Activated CD8-positive, alpha-beta memory T cell treated with anti-CD3 and anti-CD28 coated beads, Interleukin-2, amount 10 ng/mL, durations not matched to agents 7 days and 5 days (primary cell): ENCODE measurements at regions of chr1 and their contacts with region 1.

Region 1: GRCh38 chr1:152459596-152460528 is 45.8 kb upstream of the CRNN start:
- DNase-seq: peak; percentile 84
- ATAC-seq: peak; percentile 86
- H3K4me3 Mint-ChIP-seq: peak overlapping the region; percentile 57
- H3K27ac Mint-ChIP-seq: peak overlapping the region; percentile 79
- H3K4me1 Mint-ChIP-seq: peaks cover 27% of the 10 kb centered on the region
- H3K27me3 Mint-ChIP-seq: peaks cover 17% of the 10 kb centered on the region

Region 2: DNA sequence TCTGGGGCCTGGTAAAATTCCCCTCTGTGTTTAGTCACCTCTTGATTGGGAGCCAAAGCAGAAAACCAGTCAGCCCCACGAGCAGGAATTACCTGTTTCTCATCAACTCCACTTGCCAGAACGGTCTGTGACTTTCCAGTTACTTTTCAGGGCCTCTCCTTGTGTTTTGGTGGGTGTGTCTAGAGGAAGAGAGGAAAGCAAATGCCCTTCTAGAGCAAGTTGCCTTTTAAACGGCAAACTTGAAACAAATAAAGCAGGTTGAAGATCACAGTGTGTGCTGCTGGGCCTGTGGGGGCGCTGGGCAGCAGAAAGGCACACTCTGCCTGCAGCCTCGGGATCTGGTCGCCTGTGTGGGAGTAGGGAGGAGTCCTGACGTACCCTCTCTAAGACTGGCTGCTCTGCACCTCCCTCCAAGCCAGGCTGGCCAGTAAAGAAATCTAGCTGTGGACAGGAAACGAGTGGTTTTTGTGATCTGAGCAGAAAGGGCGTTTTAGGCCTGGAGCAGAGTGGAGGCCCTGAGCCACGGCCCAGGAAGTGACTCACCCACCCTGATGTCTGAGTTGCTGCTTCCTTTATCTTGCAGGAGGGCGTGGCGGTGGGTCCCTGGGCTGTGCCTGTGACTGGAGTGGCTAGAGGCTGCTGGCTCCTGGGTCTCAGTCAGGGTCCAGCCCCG is 412.0 kb before region 1 on chr1:
- CTCF ChIA-PET with region 1: interaction called, 32 read pairs
- DNase-seq: peak; percentile 96
- ATAC-seq: peak; percentile 95
- H3K4me3 Mint-ChIP-seq: peak overlapping the region; percentile 75
- H3K27ac Mint-ChIP-seq: peak overlapping the region; percentile 97
- H3K4me1 Mint-ChIP-seq: peaks cover 29% of the 10 kb centered on the region
- H3K27me3 Mint-ChIP-seq: peaks cover 3% of the 10 kb centered on the region

Region 3: DNA sequence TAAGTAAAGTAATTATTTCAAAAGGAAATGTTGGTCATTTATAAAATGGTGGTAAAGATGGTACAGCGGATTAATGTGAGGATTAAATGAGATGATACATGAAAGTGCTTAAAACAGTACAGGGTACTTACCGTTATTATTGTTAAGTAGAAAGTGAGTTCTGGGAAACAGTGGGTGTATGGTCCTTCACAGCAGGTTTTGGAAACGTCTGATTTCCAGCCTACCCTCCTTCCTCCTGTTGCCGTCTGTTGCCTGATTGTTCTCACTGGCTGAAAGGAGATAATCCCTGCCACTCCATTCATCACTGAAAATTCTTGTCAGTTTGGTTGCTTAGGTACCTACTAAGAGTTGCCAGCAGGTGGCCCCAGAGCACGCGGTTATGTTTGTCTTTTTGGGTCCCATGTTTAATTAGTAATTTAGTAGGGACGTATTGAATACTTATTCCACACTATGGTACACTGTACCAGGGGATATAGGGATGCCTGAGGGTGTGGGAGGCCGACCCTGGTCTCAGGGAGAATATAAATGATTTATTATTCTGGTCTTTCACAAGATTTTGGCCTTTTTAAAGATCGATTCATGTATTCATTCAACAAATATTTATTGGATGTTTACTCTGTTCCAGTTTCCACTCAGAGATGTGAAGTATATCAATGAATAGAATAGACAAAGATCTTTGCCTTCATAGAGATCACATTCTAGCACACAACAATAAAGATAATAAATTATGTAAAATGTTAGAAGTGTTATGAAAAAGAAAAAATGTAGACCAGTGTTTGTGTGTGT is 270.0 kb before region 1 on chr1:
- CTCF ChIA-PET with region 1: interaction called, 164 read pairs
- DNase-seq: peak; percentile 81
- ATAC-seq: peak; percentile 64
- H3K4me3 Mint-ChIP-seq: peak overlapping the region; percentile 68
- H3K27ac Mint-ChIP-seq: no peak overlapping the region
- H3K4me1 Mint-ChIP-seq: peaks cover 6% of the 10 kb centered on the region
- H3K27me3 Mint-ChIP-seq: peaks cover 14% of the 10 kb centered on the region

Region 4: DNA sequence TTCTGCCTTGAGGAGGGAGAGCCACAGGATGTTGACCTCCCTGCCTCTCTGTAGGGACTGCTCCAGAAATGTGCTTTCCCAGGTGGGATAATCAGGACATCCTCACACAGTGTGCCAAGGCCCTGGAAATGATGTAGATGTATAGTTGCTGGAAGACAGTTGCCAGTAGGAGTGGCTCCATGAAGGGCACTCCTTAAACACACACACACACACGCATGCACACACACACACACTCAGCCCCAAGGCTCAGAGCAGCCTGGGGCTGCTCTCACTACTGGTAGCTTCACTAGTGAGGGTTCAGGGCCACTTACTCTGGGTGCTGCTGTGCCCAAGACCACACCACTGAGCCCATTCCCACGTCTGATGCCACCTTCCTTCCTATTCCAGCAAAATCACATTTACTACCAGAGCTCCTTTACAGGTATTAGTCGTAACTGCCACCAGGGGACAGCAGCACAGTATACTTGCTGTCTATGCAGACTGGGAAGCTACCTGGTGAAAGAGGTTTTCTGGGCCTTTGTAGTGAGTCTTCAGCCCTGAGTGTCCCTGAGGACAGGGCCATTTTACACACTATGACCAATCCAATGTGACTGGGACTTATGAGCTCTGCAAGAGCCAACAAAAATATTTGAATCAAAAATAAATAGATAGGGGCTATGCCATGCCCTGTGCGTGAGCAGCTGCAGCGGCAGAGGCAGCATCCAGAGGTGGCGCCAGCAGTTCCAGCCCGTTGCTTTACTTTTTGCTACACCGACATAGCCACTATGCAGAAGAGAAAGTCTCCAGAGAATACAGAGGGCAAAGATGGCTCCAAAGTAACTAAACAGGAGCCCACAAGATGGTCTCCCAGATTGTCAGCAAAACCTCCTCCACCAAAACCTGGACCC is 60.8 kb before region 1 on chr1:
- CTCF ChIA-PET with region 1: interaction called, 37 read pairs
- DNase-seq: no peak
- ATAC-seq: no peak
- H3K4me3 Mint-ChIP-seq: no peak overlapping the region
- H3K27ac Mint-ChIP-seq: no peak overlapping the region
- H3K4me1 Mint-ChIP-seq: peaks cover under 1% of the 10 kb centered on the region
- H3K27me3 Mint-ChIP-seq: peaks cover 7% of the 10 kb centered on the region

Region 5: DNA sequence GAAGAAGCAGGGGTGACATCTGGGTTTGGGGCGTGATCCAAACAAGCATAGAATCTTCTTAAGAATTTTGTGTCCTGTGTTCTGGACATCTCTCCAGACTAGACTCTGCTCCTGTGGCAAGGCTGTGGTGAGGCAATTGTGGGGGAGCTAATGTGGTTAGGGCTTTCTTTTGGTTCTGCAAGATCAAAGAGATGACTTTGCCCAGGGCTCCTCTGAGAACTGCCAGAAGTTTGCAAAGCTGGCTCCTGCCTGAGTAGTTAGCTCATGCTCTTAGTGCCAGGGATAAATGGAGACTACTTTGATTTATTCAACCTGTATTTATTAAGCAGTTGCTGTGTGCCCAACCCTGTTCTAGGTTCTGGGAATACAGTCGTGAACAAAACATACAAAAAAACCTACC is 11.8 kb before region 1 on chr1:
- CTCF ChIA-PET with region 1: interaction called, 53 read pairs
- DNase-seq: no peak
- ATAC-seq: no peak
- H3K4me3 Mint-ChIP-seq: no peak overlapping the region
- H3K27ac Mint-ChIP-seq: no peak overlapping the region
- H3K4me1 Mint-ChIP-seq: no peaks in the 10 kb centered on the region
- H3K27me3 Mint-ChIP-seq: peaks cover 3% of the 10 kb centered on the region